WTC11 (cell line): ENCODE measurements at regions of chr4 and their contacts with region 1.

Region 1: GRCh38 chr4:183261953-183262775 is 57.9 kb downstream of the CLDN22 start:
- DNase-seq: peak; percentile 85
- ATAC-seq: peak; percentile 92
- H3K4me3 Mint-ChIP-seq: no peak overlapping the region
- H3K27ac Mint-ChIP-seq: peak overlapping the region; percentile 97
- H3K4me1 Mint-ChIP-seq: peaks cover 31% of the 10 kb centered on the region
- H3K27me3 Mint-ChIP-seq: no peaks in the 10 kb centered on the region
- CTCF ChIP-seq: peak; percentile 74

Region 2: GRCh38 chr4:182925298-182925738 is 336.8 kb before region 1 on chr4:
- CTCF ChIA-PET with region 1: interaction called, 21 read pairs
- POLR2A ChIA-PET with region 1: no interaction called
- DNase-seq: peak; percentile 81
- ATAC-seq: peak; percentile 97
- H3K4me3 Mint-ChIP-seq: no peak overlapping the region
- H3K27ac Mint-ChIP-seq: no peak overlapping the region
- H3K4me1 Mint-ChIP-seq: peaks cover 6% of the 10 kb centered on the region; the same call in 1 of the 2 replicates
- H3K27me3 Mint-ChIP-seq: no peaks in the 10 kb centered on the region
- CTCF ChIP-seq: peak; percentile 25; the same call in 1 of the 2 replicates

Region 3: DNA sequence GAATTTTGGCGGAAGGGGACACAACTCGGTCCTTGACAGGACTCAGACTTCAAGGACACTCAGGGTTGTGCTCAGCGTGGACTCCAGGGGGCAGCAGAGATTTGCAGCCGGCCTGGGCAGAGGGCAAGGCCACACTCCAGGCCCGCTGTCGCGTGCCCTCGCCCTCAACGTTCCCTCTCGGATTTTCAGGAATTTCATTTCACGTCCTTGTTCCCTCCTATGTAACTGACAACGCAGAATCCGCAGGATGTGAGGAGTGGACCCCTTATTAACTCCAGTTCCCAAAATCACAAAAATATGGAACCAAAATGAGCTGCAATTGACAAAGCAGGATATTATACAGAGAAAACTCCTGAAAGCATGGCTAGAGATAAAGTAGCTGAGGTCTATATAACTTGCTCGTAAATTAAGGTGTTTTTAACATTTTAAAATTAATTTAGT is 323.9 kb before region 1 on chr4:
- CTCF ChIA-PET with region 1: interaction called, 40 read pairs
- POLR2A ChIA-PET with region 1: no interaction called
- DNase-seq: peak; percentile 86
- ATAC-seq: peak; percentile 100
- H3K4me3 Mint-ChIP-seq: no peak overlapping the region
- H3K27ac Mint-ChIP-seq: no peak overlapping the region
- H3K4me1 Mint-ChIP-seq: peaks cover 16% of the 10 kb centered on the region
- H3K27me3 Mint-ChIP-seq: peaks cover 6% of the 10 kb centered on the region; the same call in 1 of the 2 replicates
- CTCF ChIP-seq: peak; percentile 86

Region 4: DNA sequence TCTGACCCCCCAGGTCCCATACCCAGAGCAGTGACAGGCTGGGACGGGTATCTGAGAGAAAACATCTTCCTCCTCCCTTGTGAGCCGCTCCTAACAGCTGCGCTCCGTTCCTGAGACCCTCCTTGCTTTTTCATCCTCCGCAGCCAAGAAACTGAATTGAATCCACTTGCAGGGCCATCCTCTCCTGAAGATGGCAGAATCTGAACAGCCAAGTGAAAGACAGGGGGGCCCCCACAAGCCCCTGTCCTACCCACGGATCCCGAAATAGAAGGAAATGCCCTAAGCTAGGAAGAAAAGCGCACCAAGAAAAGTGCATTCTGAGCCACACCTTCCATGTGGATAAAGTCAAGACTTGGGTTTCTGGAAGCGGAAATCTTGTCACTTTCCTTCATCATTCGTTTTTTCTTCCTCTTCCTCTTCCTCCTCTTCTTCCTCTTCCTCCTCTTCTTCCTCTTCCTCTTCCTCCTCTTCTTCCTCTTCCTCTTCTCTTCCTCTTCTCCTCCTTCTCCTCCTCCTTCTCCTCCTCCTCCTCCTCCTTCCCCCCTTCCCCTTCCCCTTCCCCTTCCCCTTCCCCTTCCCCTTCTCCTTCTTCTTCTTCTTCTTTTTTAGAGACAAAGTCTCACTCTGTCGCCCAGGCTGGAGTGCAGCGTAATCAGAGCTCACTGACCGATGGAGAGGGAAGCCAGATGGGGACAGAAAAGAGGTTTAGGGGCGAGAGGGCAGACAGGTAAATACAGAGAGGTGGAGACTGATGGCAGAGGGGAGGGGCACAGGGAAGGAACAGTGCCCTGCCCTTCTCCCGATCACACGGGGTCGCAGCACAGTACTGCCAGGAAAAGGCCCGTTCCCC is 249.1 kb before region 1 on chr4:
- CTCF ChIA-PET with region 1: interaction called, 20 read pairs
- POLR2A ChIA-PET with region 1: no interaction called
- DNase-seq: peak; percentile 21
- ATAC-seq: peak; percentile 85
- H3K4me3 Mint-ChIP-seq: peak overlapping the region; percentile 69
- H3K27ac Mint-ChIP-seq: no peak overlapping the region
- H3K4me1 Mint-ChIP-seq: peaks cover 11% of the 10 kb centered on the region
- H3K27me3 Mint-ChIP-seq: no peaks in the 10 kb centered on the region; the same call in 1 of the 2 replicates
- CTCF ChIP-seq: no peak

Region 5: DNA sequence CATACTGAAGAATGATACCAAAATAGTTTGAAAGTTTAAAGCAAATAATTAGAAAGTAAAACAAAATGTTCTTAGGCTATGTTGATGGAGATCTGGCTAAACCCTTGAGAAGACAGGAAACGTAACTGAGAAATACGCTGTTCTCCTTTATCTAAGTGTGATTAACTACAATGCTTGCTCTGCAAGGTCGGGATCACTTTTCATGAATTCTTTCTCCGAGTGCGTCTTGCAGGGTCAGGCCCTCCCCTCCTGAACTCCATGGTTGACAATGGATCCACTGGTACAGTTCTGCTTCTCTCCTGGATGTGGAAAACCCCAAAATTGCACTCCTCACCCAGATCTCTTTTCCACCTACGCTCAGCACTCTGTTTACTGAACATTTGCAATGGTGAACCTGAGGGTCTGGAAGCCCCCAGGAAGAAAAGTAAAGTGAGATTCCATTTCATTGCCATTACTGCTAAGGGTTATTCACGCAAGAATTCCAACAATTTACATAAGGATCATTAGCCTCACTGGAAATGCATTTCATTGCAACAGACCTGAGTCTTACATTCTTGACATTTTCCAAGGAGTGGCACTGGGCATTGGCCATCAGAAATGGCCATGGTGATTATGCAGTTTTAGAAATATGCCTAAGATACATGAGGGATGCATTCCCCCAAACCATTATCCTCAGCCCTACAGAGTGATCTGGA is 187.7 kb before region 1 on chr4:
- CTCF ChIA-PET with region 1: interaction called, 73 read pairs
- POLR2A ChIA-PET with region 1: interaction called, 4 read pairs
- DNase-seq: no peak
- ATAC-seq: peak; percentile 37
- H3K4me3 Mint-ChIP-seq: peak overlapping the region; percentile 31
- H3K27ac Mint-ChIP-seq: peak overlapping the region; percentile 81
- H3K4me1 Mint-ChIP-seq: peaks cover 32% of the 10 kb centered on the region
- H3K27me3 Mint-ChIP-seq: no peaks in the 10 kb centered on the region
- CTCF ChIP-seq: no peak

Region 6: DNA sequence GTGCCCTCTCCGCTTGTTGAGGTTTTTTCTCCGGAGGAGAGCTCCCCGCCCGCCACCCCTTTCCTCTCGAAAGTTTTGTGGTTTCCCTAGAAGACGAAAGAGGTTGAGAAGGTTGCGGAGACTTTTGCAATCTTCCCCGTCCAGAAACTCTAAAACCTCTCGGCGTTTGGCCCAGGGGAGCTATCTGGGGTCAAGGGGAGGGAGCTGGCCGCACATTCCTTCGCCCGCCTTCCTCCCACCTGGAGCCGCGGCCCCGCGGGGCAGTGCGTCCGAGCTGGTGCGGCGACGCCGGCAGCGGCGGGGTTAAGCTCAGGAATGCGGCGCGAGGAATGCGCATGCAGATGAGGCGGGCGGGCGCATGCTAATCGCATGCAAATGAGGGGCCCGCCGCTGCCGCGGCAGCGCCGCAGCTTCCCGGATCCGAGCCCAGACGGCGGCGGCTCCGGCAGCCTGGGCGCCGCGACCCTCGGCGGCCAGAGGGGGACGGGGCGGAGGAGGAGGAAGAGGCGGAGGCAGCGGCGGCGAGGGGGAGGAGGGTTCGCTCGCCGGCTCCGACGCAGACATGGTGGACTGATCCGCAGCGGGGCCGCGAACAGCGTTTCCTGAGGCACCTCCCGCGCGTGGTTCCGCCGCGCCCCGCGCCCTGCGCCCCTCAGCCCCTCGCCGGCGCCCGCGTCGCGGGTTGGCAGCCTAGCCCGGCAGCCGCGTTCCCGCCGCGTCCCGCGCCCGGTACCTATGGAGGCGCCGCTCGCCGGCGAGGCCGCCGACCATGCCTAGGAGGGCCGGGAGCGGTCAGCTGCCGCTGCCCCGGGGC is 163.2 kb before region 1 on chr4 and contains the start of gene WWC2:
- CTCF ChIA-PET with region 1: interaction called, 22 read pairs
- POLR2A ChIA-PET with region 1: interaction called, 3 read pairs
- DNase-seq: peak; percentile 96
- ATAC-seq: peak; percentile 80
- H3K4me3 Mint-ChIP-seq: peak within 1 kb of the TSS; percentile 91
- H3K27ac Mint-ChIP-seq: peak within 1 kb of the TSS; percentile 68
- H3K4me1 Mint-ChIP-seq: peaks cover 47% of the 10 kb centered on the region
- H3K27me3 Mint-ChIP-seq: peaks cover 3% of the 10 kb centered on the region
- CTCF ChIP-seq: no peak
- total RNA-seq, gene WWC2: 126 to 133 TPM (median 133 TPM) in 3 replicates

Region 7: DNA sequence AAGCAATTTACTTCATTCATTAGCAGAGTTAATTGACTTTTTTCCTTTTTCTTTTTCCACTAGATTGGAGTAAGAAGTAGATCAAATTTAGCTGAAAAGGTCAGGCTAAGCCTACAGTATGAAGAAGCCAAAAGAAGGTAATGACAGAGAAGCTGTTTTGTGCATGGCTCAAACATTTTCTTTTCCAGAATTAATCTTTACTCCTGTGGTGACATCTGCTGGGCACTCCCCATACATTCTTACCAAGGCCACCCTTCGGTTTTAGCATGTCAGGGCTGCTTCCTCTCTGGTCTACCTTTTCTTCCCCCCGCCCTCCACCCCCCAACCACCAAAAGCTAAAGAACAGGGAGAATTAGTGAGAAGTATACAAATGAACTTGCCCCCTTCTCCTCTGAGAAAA is 12.3 kb before region 1 on chr4:
- CTCF ChIA-PET with region 1: interaction called, 13 read pairs
- POLR2A ChIA-PET with region 1: no interaction called
- DNase-seq: no peak
- ATAC-seq: peak; percentile 78
- H3K4me3 Mint-ChIP-seq: no peak overlapping the region
- H3K27ac Mint-ChIP-seq: peak overlapping the region; percentile 51
- H3K4me1 Mint-ChIP-seq: peaks cover 3% of the 10 kb centered on the region
- H3K27me3 Mint-ChIP-seq: no peaks in the 10 kb centered on the region
- CTCF ChIP-seq: no peak

Region 8: DNA sequence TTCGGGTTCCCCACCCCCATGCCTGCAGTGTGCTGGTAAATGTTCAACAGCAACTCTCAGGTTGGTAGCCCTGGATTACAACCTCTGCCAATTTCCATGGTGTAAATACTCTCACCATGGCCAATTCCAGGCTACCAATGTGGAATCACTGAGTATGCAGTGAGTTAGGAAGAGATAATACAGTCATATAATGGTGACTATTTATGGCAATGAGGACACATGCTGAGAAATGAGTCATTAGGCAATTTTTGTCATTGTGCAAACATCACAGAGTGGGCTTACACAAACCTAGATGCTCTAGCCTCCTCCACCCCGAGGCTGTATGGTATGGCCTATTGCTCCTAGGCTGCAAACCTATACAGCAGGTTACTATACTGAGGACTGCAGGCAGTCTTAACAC is 64.7 kb after region 1 on chr4:
- CTCF ChIA-PET with region 1: no interaction called
- POLR2A ChIA-PET with region 1: no interaction called
- DNase-seq: no peak
- ATAC-seq: no peak
- H3K4me3 Mint-ChIP-seq: no peak overlapping the region
- H3K27ac Mint-ChIP-seq: no peak overlapping the region
- H3K4me1 Mint-ChIP-seq: no peaks in the 10 kb centered on the region
- H3K27me3 Mint-ChIP-seq: no peaks in the 10 kb centered on the region
- CTCF ChIP-seq: no peak